GM12878 (cell line): ENCODE measurements at regions of chr10 and their contacts with region 1.

Region 1: DNA sequence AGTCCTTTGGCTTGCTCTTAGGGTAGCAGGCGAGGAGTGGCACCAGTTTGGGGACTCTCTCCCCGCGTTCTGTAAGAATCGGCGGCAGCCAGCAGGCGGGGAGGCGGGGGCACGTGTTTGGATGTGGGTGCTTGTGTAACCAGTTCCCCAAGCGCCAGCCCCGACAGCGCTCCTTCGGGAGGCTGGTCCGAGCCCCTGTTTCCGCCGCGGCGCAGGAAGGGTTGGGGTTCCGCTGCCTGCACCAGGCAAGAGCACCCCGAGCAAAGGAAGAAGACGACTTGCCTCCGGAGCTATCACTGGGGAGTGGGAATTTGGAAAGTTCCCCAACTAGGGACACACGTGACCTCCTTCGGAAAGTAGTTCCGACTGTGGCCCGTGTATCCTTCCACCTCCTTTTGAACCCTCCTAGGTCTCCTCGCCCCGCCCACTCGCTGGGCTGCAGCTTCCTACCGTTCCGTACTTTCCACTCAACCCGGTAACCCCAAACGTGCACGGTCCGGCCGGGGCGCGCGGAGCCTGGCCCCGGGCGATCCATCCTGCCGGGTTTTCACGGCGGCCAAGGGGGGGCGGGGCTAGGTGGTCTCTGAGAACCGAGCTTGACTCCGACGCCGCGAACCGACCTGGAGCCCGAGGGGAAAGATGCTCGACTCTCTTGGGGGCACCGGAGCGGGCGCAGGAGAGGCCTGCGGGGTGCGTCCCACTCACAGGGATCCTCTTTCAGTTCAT is 1.2 kb downstream of the KLLN start:
- DNase-seq: peak; percentile 95
- ATAC-seq: peak; percentile 55
- H3K4me3 ChIP-seq: peak overlapping the region; percentile 84
- H3K27ac ChIP-seq: peak overlapping the region; percentile 98
- H3K4me1 ChIP-seq: peaks cover 8% of the 10 kb centered on the region
- H3K27me3 ChIP-seq: no peaks in the 10 kb centered on the region
- CTCF ChIP-seq: no peak
- EP300 ChIP-seq: peak in 1 of 2 experiments; percentile 72; a peak in 2 of 4 replicates
- POLR2A ChIP-seq: peak; percentile 87
- RAD21 ChIP-seq: peak; percentile 37

Region 2: DNA sequence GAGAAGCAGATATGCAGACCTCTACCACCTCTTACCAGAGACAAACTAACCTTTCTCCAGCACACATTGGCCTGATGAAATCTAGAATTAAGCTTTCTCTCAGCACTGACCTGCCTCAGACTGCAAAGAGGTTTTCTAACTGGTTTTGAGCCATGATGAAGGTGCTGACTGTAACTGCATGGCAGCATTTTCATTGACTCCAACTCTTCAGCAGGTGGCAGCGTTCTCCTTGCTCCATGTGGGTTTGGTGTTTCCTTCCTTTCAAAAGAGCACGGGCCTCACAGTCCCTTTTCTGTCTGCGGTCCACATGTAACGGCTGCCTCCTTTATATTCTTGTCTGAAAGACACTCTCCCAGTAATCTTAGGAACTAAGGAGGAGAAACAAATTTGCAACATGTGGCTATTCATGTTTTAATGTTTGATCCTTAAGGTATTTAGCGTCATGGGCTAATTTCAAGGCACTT is 11.3 kb before region 1 on chr10:
- CTCF ChIA-PET with region 1: interaction called, 4 read pairs
- POLR2A ChIA-PET with region 1: interaction called, 5 read pairs
- RAD21 ChIA-PET with region 1: interaction called, 7 read pairs
- SMC1A ChIA-PET with region 1: interaction called, 10 read pairs
- in situ Hi-C with region 1: no loop called
- intact Hi-C with region 1: no loop called
- DNase-seq: no peak
- ATAC-seq: peak; percentile 96
- H3K4me3 ChIP-seq: no peak overlapping the region
- H3K27ac ChIP-seq: no peak overlapping the region
- H3K4me1 ChIP-seq: no peaks in the 10 kb centered on the region
- H3K27me3 ChIP-seq: no peaks in the 10 kb centered on the region
- CTCF ChIP-seq: peak; percentile 58 to 74 (median 67); a peak in 5 of 6 replicates
- EP300 ChIP-seq: no peak
- POLR2A ChIP-seq: no peak
- RAD21 ChIP-seq: peak; percentile 74

Region 3: GRCh38 chr10:88064608-88065382 is 202.7 kb after region 1 on chr10:
- CTCF ChIA-PET with region 1: interaction called, 4 read pairs
- POLR2A ChIA-PET with region 1: interaction called, 8 read pairs
- RAD21 ChIA-PET with region 1: interaction called, 32 read pairs
- SMC1A ChIA-PET with region 1: interaction called, 24 read pairs
- in situ Hi-C with region 1: loop called (anchors 10 kb)
- intact Hi-C with region 1: loop called (anchors 2 kb)
- DNase-seq: peak; percentile 95
- ATAC-seq: peak; percentile 74
- H3K4me3 ChIP-seq: no peak overlapping the region; the same call in 1 of the 2 replicates
- H3K27ac ChIP-seq: peak overlapping the region; percentile 92
- H3K4me1 ChIP-seq: peaks cover 88% of the 10 kb centered on the region
- H3K27me3 ChIP-seq: no peaks in the 10 kb centered on the region
- CTCF ChIP-seq: no peak
- EP300 ChIP-seq: peak; percentile 90 to 93; a peak in 3 of 4 replicates
- POLR2A ChIP-seq: no peak
- RAD21 ChIP-seq: 0 out of 2 replicates have a peak, but pooled peaks have one; percentile 11

Region 4: DNA sequence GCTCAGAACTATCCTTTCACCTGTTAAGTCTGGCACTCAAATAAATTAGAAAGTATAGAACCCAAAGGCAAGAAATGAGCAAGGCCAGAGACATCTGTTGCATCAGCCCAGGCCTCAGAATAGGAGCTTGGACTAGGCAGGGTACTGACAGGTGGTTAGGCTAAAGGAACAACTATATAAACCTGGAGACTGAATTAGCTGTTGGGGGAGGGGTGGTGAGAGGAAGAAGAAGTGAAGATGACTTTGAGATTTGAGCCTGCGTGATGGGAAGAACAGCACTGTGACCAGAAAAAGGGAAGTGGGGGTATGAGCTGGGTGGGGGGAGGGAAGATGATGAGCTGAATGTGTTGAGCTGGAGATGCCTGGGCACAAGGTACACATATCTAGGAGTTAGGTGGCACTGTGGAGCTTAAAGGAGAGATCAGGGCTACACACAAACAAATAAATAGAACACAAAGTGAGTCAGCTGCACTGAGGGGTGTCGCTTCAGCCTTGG is 246.0 kb after region 1 on chr10:
- CTCF ChIA-PET with region 1: interaction called, 45 read pairs
- POLR2A ChIA-PET with region 1: interaction called, 5 read pairs
- RAD21 ChIA-PET with region 1: interaction called, 51 read pairs
- SMC1A ChIA-PET with region 1: interaction called, 32 read pairs
- in situ Hi-C with region 1: loop called (anchors 5 kb)
- intact Hi-C with region 1: loop called (anchors 1 kb)
- DNase-seq: peak; percentile 94
- ATAC-seq: peak; percentile 56
- H3K4me3 ChIP-seq: no peak overlapping the region
- H3K27ac ChIP-seq: peak overlapping the region; percentile 92
- H3K4me1 ChIP-seq: peaks cover 92% of the 10 kb centered on the region
- H3K27me3 ChIP-seq: no peaks in the 10 kb centered on the region
- CTCF ChIP-seq: peak; percentile 39 to 46 (median 45); a peak in 5 of 6 replicates
- EP300 ChIP-seq: peak; percentile 69 to 76; a peak in 2 of 4 replicates
- POLR2A ChIP-seq: no peak
- RAD21 ChIP-seq: peak; percentile 41; the same call in 1 of the 2 replicates

Region 5: DNA sequence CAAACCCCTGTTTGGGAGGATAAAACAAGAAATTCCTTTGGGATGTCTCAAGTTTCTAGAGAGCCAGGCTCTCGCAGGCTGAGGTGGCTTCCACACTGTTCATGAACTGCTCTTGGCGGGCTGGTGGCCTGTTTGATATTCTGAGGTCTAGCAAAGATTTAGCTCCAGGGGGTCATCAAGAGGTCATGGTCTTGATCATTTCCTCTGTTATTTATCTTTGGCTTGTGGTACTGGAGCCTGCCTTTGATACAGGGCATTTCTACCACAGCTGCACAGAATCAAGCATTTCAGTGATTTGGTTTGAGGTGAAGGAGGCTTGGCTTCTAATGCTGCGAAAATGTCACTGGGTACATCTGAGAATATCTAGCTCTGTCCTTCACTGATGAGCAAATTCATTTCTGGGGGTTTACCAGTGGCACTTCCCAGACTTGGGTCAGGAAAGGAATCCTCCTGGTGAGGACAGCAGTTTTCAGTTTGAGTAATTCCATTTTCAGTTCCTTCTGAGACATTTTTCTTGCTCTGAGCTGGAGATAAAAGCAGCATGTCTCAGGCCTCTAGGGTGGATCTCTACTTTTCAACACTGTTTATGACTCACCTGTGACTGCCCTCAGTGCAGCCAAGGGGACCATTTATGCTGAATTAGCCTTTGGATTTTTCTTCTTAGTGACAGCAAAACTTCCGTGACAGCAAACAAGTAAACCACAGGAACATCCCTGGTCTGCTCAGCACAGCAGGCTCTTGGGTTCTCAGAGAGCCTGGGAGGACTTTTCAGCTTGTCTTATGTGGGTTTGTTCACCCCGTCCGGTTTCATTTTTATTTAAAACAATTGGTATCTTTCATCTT is 409.0 kb after region 1 on chr10:
- CTCF ChIA-PET with region 1: no interaction called
- POLR2A ChIA-PET with region 1: no interaction called
- RAD21 ChIA-PET with region 1: interaction called, 4 read pairs
- SMC1A ChIA-PET with region 1: interaction called, 3 read pairs
- in situ Hi-C with region 1: loop called (anchors 5 kb)
- intact Hi-C with region 1: loop called (anchors 1 kb)
- DNase-seq: peak; percentile 97
- ATAC-seq: peak; percentile 95
- H3K4me3 ChIP-seq: no peak overlapping the region; the same call in 1 of the 2 replicates
- H3K27ac ChIP-seq: peak overlapping the region; percentile 96
- H3K4me1 ChIP-seq: peaks cover 48% of the 10 kb centered on the region
- H3K27me3 ChIP-seq: no peaks in the 10 kb centered on the region
- CTCF ChIP-seq: no peak
- EP300 ChIP-seq: peak; percentile 93 to 95
- POLR2A ChIP-seq: peak; percentile 7; the same call in 1 of the 2 replicates
- RAD21 ChIP-seq: peak; percentile 17; the same call in 1 of the 2 replicates

Region 6: DNA sequence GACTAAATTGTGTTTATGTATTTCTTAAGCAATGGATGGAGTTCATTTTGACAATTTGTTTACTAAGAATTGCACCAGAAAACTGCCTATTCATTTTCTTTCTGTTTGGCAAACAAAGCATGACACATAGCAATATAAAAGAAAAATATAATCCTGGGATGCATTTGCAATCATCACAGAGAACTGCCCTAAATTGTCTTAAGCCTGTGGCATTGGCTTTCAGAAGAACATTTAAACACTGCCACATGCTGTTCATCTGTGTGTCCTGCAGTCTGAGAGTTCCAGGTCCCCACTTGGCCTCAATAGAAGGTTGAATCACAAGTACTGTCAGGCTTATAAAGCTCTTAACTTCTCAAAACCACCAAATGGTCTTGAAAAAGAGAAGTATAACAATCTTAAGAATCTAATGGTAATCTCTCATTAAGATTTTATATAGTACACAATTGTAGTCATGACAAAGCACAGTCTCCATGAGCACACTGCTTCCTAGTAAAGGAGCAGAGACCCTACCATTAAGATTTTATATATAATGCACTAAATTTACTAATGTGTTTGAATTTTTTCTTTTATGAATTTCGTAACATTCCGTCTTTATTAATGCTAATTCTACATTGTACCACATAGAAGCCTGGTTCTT is 691.1 kb after region 1 on chr10:
- CTCF ChIA-PET with region 1: interaction called, 26 read pairs
- POLR2A ChIA-PET with region 1: no interaction called
- RAD21 ChIA-PET with region 1: interaction called, 22 read pairs
- SMC1A ChIA-PET with region 1: interaction called, 15 read pairs
- in situ Hi-C with region 1: loop called (anchors 5 kb)
- intact Hi-C with region 1: loop called (anchors 2 kb)
- DNase-seq: peak; percentile 45
- ATAC-seq: peak; percentile 99
- H3K4me3 ChIP-seq: no peak overlapping the region
- H3K27ac ChIP-seq: no peak overlapping the region; the same call in 1 of the 2 replicates
- H3K4me1 ChIP-seq: 0 out of 2 replicates have a peak, but pooled peaks cover 5% of the 10 kb centered on the region
- H3K27me3 ChIP-seq: no peaks in the 10 kb centered on the region
- CTCF ChIP-seq: peak; percentile 84 to 94 (median 90)
- EP300 ChIP-seq: no peak
- POLR2A ChIP-seq: no peak
- RAD21 ChIP-seq: peak; percentile 97